ENCODE measurements at regions of chr5 and their contacts with region 1.

Region 1: DNA sequence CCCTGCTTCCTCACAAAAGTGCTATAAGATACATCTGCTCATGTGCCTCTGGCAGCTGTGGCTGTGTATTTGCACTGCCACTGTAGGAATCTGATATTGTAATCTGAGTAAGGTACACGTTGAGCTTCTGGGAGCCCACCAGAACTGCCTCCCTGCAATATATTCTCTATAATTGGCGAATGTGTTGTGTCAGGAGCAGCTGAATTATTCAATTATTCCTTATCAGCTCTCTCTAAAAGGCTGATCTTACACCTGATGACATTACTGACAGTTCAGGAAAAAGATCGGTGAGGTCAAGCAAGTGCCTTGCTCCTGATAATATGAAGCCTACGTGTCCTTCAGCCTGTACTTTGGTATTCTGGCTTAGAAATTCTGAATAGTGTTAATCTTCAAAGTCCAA is 1015.0 kb downstream of the CDH9 start:
- DNase-seq: no peak
- H3K4me3 ChIP-seq: no peak overlapping the region
- H3K27ac ChIP-seq: no peak overlapping the region
- H3K4me1 ChIP-seq: no peaks in the 10 kb centered on the region
- H3K27me3 ChIP-seq: no peaks in the 10 kb centered on the region
- CTCF ChIP-seq: no peak
- EP300 ChIP-seq: no peak
- POLR2A ChIP-seq: no peak
- RAD21 ChIP-seq: no peak

Region 2: DNA sequence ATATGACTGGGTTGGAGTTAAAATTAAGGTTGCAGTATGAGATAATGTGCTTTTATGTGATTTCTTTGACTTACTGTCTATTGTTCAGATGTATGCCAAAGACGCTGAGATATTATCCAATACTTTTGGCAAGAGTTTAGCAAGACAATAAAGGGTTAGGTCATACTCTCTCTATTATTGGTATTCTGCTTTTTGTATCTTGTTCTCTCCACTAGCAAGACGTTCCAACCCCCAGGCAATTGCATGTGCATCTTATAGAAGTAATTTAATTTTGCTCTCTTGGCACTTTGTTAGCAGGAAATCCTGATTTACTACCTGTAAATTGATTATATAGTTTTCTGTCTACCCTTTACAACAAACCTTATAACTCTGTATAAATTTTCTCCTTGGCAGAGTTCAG is 78.6 kb before region 1 on chr5:
- CTCF ChIA-PET with region 1: no interaction called
- POLR2A ChIA-PET with region 1: no interaction called
- DNase-seq: no peak
- H3K4me3 ChIP-seq: no peak overlapping the region
- H3K27ac ChIP-seq: no peak overlapping the region
- H3K4me1 ChIP-seq: peaks cover 0 to 4% (median 0%) of the 10 kb centered on the region in 4 experiments; a peak in 1 of 7 replicates
- H3K27me3 ChIP-seq: no peaks in the 10 kb centered on the region
- CTCF ChIP-seq: no peak
- EP300 ChIP-seq: no peak
- POLR2A ChIP-seq: no peak
- RAD21 ChIP-seq: no peak

Region 3: DNA sequence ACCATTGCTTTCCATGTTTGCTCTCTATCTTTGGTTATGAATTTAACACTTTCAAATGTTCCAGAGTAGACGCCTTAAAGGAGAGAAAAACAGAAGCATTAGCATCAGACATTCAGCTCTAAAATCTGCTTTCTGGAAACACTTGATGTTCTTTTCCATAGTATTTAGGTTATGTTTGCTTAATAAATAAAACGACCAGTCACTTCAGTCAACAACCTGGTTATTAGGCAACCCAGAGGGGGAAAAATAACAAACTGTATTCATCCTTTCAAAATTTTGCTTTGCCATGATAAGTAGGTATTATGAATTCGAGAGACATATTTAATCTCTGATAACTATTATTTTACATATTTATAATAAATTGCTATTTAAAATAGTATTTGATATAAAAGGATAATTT is 29.7 kb before region 1 on chr5:
- CTCF ChIA-PET with region 1: no interaction called
- POLR2A ChIA-PET with region 1: no interaction called
- DNase-seq: no peak
- H3K4me3 ChIP-seq: no peak overlapping the region
- H3K27ac ChIP-seq: no peak overlapping the region
- H3K4me1 ChIP-seq: no peaks in the 10 kb centered on the region
- H3K27me3 ChIP-seq: no peaks in the 10 kb centered on the region
- CTCF ChIP-seq: no peak
- EP300 ChIP-seq: no peak
- POLR2A ChIP-seq: no peak
- RAD21 ChIP-seq: no peak

Region 4: GRCh38 chr5:26329562-26330189 is 306.3 kb after region 1 on chr5:
- CTCF ChIA-PET with region 1: interaction called, 11 read pairs
- POLR2A ChIA-PET with region 1: no interaction called
- DNase-seq: no peak
- H3K4me3 ChIP-seq: no peak overlapping the region
- H3K27ac ChIP-seq: no peak overlapping the region
- H3K4me1 ChIP-seq: peaks cover 0 to 2% (median 0%) of the 10 kb centered on the region in 4 experiments; a peak in 1 of 7 replicates
- H3K27me3 ChIP-seq: no peaks in the 10 kb centered on the region
- CTCF ChIP-seq: peak in 2 of 3 experiments; percentile 38 to 49; a peak in 2 of 4 replicates
- EP300 ChIP-seq: no peak
- POLR2A ChIP-seq: no peak
- RAD21 ChIP-seq: peak; percentile 75 to 77

Measured in H1 (cell line).